ENCODE measurements at regions of chr5 and their contacts with region 1.

Region 1: GRCh38 chr5:87780831-87781760 is 368.4 kb upstream of the CCNH start:
- DNase-seq: peak; percentile 76
- ATAC-seq: peak; percentile 98
- H3K4me3 ChIP-seq: no peak overlapping the region; a peak in 1 of 4 replicates
- H3K27ac ChIP-seq: no peak overlapping the region
- H3K4me1 ChIP-seq: peaks cover 0 to 3% of the 10 kb centered on the region in 2 experiments; a peak in 1 of 4 replicates
- H3K27me3 ChIP-seq: no peaks in the 10 kb centered on the region
- CTCF ChIP-seq: peak; percentile 72 to 91 (median 85)
- POLR2A ChIP-seq: no peak
- RAD21 ChIP-seq: peak; percentile 95

Region 2: GRCh38 chr5:87421307-87421706 is 359.8 kb before region 1 on chr5:
- CTCF ChIA-PET with region 1: no interaction called
- POLR2A ChIA-PET with region 1: no interaction called
- RAD21 ChIA-PET with region 1: no interaction called
- intact Hi-C with region 1: loop called (anchors 10 kb)
- DNase-seq: no peak
- ATAC-seq: no peak
- H3K4me3 ChIP-seq: no peak overlapping the region
- H3K27ac ChIP-seq: no peak overlapping the region
- H3K4me1 ChIP-seq: peaks cover 0 to 6% of the 10 kb centered on the region in 2 experiments; a peak in 1 of 4 replicates
- H3K27me3 ChIP-seq: no peaks in the 10 kb centered on the region
- CTCF ChIP-seq: no peak
- POLR2A ChIP-seq: no peak
- RAD21 ChIP-seq: no peak

Region 3: GRCh38 chr5:87916320-87916719 is 135.2 kb after region 1 on chr5:
- CTCF ChIA-PET with region 1: no interaction called
- POLR2A ChIA-PET with region 1: no interaction called
- RAD21 ChIA-PET with region 1: no interaction called
- intact Hi-C with region 1: no loop called
- DNase-seq: no peak
- ATAC-seq: no peak
- H3K4me3 ChIP-seq: no peak overlapping the region
- H3K27ac ChIP-seq: no peak overlapping the region
- H3K4me1 ChIP-seq: no peaks in the 10 kb centered on the region
- H3K27me3 ChIP-seq: no peaks in the 10 kb centered on the region
- CTCF ChIP-seq: no peak
- POLR2A ChIP-seq: no peak
- RAD21 ChIP-seq: no peak

Region 4: DNA sequence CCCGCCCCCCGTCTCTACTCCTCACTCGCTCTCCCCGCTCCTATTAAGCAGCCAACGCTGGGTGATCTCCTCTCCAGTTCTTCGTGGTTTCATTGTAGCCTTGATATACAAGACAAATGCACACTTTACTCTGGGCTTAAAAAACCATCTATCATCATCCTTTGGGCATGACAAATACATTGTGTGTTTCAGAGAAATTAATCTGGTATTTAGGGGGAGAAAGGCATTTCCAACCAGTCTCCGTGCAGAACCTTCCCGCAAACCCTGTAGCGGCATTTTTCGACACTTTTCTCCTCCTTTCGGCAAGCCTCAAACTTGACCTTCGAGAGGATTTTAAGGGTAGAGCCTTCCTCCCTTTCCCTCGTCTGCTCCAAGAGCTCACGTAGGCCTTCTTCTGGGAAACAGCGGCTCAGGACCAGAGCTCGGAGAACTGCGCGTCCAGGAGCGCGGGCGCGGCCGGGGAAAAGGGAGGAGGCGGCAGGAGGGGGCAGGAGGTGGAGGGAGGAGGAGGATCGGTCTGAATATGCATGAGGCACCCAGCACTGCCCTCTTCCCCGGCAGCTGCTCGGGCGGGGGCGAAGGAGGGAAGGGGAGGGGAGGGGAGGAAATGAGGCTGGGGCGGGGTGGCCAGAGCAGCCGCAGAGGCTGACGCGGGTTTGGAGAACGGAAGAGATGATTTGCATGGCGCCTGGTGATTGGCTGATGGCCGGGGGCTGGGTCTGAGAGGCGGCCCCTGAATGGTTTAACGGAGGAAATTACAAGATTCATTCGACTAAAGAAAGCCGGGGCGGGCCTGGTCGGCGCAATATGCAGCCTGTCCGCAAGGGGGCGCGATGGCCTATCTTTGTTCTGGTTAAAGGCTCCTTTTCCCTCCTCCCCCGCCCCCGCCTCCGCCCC is 360.0 kb after region 1 on chr5:
- CTCF ChIA-PET with region 1: interaction called, 6 read pairs
- POLR2A ChIA-PET with region 1: interaction called, 4 read pairs
- RAD21 ChIA-PET with region 1: no interaction called
- intact Hi-C with region 1: loop called (anchors 2 kb)
- DNase-seq: peak; percentile 93
- ATAC-seq: peak; percentile 95
- H3K4me3 ChIP-seq: peak overlapping the region; percentile 54 to 63
- H3K27ac ChIP-seq: no peak overlapping the region
- H3K4me1 ChIP-seq: peaks cover 5 to 19% of the 10 kb centered on the region in 2 experiments; a peak in 3 of 4 replicates
- H3K27me3 ChIP-seq: no peaks in the 10 kb centered on the region
- CTCF ChIP-seq: peak; percentile 22 to 68 (median 51); a peak in 4 of 6 replicates
- POLR2A ChIP-seq: no peak
- RAD21 ChIP-seq: peak; percentile 56

Region 5: DNA sequence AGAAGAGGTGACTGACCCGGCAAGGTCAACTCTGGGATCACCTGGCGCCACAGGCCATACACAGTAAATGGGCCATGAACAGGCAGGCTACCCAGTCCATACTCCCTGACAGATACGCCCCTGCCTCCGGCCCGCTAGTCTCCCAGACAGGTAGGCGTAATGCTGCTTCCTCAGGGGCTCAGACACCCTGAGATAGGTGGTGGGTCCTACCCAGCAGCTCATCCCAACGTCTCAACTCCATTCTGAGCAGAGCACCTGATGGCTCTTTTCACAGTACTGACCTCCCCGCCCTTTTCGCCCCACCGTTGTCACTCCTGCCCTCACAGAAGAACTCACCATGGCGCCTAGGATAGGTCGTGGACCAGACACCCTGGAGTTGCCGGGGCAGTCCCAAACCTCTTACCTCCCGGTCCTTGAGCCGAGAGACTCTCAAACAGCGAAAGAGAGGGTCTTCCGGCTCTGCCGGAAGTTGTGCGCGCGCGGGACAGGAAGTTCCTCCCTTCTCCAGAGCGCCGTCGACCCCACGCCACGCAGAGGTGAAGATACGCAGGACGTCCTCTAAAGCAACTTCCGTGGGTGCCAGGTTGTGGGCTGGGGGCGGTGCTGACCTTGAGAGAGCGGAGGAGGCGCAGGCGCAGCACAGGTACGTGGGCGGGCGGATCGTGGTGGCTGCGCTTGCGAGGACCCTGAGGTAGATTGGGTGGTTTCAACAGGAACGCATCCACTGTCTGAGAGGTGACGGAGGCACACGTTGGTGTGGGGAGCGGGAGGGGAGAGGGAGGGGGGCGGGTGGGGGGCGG is 487.5 kb after region 1 on chr5 and contains the start of gene TMEM161B:
- CTCF ChIA-PET with region 1: no interaction called
- POLR2A ChIA-PET with region 1: no interaction called
- RAD21 ChIA-PET with region 1: no interaction called
- intact Hi-C with region 1: loop called (anchors 10 kb)
- DNase-seq: peak; percentile 94
- ATAC-seq: peak; percentile 98
- H3K4me3 ChIP-seq: peak within 1 kb of the TSS; percentile 82 to 99
- H3K27ac ChIP-seq: peak within 1 kb of the TSS; percentile 71
- H3K4me1 ChIP-seq: peaks cover 12 to 14% of the 10 kb centered on the region in 2 experiments; a peak in 3 of 4 replicates
- H3K27me3 ChIP-seq: no peaks in the 10 kb centered on the region
- CTCF ChIP-seq: no peak
- POLR2A ChIP-seq: peak; percentile 83
- RAD21 ChIP-seq: no peak
- total RNA-seq, gene TMEM161B: 22.1 TPM

Region 6: DNA sequence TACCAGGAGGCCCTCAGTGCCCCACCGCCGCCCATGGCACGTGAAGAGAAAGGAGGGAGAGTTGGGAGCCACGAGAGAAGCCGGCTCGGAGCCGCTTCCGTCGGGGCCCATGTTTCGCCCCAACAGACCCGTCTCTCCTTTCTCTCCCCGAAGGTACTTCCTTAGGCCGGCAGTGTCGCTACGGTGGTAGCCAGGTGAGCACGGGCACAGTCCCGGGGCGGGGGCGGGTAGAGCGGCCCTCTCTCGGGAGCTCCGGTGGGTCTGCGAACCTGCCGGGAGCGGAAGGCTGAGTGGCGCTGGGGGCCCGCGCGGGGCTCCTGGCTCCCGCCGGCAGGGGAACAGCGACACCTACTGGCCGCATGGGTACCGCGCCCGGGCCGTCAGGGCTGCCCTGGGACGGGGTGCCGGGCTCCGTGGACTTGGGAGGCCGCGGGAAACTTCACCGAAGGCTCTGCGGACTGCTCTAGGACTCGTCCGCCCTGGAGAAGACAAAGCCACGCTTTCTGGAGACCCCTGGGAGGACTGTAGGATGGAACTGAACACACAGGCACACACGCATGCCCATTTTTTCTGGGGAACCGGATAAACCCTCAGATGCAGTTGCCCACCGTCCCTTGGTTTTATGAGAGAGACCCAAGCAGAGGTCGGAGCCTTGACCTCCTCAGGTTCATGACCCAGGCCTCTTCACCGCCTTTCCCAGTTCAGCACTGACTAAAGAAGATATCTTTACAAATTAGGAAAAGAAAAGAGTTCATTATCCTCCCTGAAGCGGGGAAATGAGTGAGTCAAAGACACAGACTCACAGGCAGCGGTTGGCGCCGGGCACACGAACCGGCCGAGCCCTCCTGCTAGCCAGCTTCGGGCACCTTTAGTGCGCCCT is 899.4 kb after region 1 on chr5:
- CTCF ChIA-PET with region 1: interaction called, 18 read pairs
- POLR2A ChIA-PET with region 1: no interaction called
- RAD21 ChIA-PET with region 1: interaction called, 3 to 5 read pairs
- intact Hi-C with region 1: loop called (anchors 2 kb)
- DNase-seq: peak; percentile 24
- ATAC-seq: peak; percentile 92
- H3K4me3 ChIP-seq: peak overlapping the region; percentile 25 to 55
- H3K27ac ChIP-seq: no peak overlapping the region
- H3K4me1 ChIP-seq: peaks cover 0 to 12% of the 10 kb centered on the region in 2 experiments; a peak in 2 of 4 replicates
- H3K27me3 ChIP-seq: no peaks in the 10 kb centered on the region
- CTCF ChIP-seq: peak; percentile 68 to 89 (median 87); a peak in 5 of 6 replicates
- POLR2A ChIP-seq: no peak
- RAD21 ChIP-seq: peak; percentile 90

Region 7: GRCh38 chr5:88690409-88691229 is 909.5 kb after region 1 on chr5:
- CTCF ChIA-PET with region 1: interaction called, 60 read pairs
- POLR2A ChIA-PET with region 1: interaction called, 6 read pairs
- RAD21 ChIA-PET with region 1: interaction called, 9 to 14 read pairs
- intact Hi-C with region 1: loop called (anchors 1 kb)
- DNase-seq: peak; percentile 44
- ATAC-seq: peak; percentile 96
- H3K4me3 ChIP-seq: peak overlapping the region; percentile 2 to 32; a peak in 2 of 4 replicates
- H3K27ac ChIP-seq: no peak overlapping the region
- H3K4me1 ChIP-seq: peaks cover 0 to 10% of the 10 kb centered on the region in 2 experiments; a peak in 2 of 4 replicates
- H3K27me3 ChIP-seq: no peaks in the 10 kb centered on the region
- CTCF ChIP-seq: peak; percentile 65 to 98 (median 95); a peak in 5 of 6 replicates
- POLR2A ChIP-seq: no peak
- RAD21 ChIP-seq: peak; percentile 96

Region 8: DNA sequence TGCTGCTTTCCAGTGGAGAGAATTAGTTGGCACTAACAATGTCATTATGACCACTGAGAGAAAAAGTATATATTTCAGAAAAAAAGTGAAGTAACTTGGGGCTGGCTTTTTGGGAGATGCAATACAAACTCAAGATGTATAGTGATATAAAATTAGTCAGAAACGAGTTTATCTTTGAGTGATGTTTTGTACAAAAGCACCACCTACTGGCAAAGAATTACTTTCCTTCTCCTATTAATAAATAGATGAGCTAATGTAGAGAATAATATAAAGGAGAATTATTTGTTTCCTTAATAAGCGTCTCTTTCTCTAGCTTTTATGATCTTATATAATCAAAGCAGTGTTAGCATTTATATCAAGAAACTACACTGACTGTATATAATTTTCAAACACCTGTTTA is 943.1 kb after region 1 on chr5:
- CTCF ChIA-PET with region 1: interaction called, 79 read pairs
- POLR2A ChIA-PET with region 1: interaction called, 4 read pairs
- RAD21 ChIA-PET with region 1: interaction called, 5 read pairs
- intact Hi-C with region 1: loop called (anchors 1 kb)
- DNase-seq: peak; percentile 8
- ATAC-seq: 0 out of 2 replicates have a peak, but pooled peaks have one; percentile 44
- H3K4me3 ChIP-seq: no peak overlapping the region
- H3K27ac ChIP-seq: no peak overlapping the region
- H3K4me1 ChIP-seq: no peaks in the 10 kb centered on the region
- H3K27me3 ChIP-seq: no peaks in the 10 kb centered on the region
- CTCF ChIP-seq: peak; percentile 20 to 51 (median 27); a peak in 4 of 6 replicates
- POLR2A ChIP-seq: no peak
- RAD21 ChIP-seq: peak; percentile 58